ENCODE measurements at regions of chr2 and their contacts with region 1.

Region 1: DNA sequence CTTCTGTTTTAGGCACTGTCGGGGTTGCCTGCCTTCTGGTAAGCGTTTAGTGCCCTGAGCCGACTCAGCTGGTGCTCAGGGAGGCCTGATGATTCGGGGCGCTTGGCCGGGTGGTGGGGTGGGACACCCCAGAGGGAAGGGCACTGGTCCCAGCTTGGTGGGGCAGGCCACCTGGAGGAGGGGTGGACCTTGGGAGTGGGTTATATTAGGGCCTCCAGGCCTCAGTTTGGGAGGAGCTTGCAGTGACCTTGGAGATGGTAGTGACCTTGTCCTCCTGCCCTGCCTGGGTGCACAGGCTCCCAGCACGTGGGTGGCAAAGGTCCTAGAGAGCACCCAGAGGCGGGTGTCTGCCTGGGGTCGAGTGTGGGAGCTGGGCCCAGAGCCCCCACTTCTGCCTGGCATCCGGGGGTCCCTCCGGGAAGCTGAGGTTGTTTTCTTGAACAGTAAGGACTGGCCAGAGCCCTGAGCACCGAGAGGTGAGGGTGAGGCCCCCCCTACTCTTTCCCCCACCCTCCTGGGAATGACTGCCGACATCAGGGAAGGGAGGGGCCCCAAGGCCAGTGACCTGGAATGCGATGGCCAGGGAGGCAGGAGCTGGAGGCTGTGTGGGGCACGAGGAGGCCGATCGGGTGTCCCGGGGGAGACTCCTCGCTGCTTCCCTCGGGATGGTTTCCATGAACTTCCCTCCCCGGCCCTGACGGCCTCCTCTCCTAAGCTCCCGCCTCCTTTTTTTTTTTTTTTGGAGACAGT is 61.3 kb downstream of the HPCAL1 start:
- DNase-seq: no peak
- ATAC-seq: no peak
- H3K4me3 ChIP-seq: no peak overlapping the region
- H3K4me3 Mint-ChIP-seq: no peak overlapping the region
- H3K27ac ChIP-seq: no peak overlapping the region
- H3K27ac Mint-ChIP-seq: no peak overlapping the region
- H3K4me1 ChIP-seq: peaks cover 0 to 47% of the 10 kb centered on the region in 2 experiments
- H3K4me1 Mint-ChIP-seq: peaks cover 39 to 58% (median 58%) of the 10 kb centered on the region in 3 donors
- H3K27me3 ChIP-seq: no peaks in the 10 kb centered on the region
- H3K27me3 Mint-ChIP-seq: no peaks in the 10 kb centered on the region

Region 2: DNA sequence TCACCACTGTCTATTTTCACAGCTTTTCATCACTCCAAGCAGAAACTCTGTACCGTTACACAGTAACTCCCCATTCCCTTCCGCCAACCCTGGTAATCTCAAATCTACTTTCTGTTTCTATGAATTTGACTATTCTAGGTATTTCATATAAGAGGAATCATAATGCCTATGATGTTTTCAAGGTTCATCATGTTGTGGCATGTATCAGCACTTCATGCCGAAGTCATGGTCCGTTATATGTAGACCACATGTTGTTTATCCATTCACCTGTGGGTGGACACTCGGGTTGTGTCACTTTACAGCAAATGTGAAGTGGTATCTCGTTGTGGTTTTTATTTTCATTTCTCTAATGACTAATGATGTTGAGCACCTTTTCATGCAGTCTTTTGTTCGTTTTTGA is 918.9 kb before region 1 on chr2:
- CTCF ChIA-PET with region 1: interaction called in 1 of 2 experiments, 10 read pairs
- POLR2A ChIA-PET with region 1: no interaction called
- DNase-seq: no peak
- ATAC-seq: no peak
- H3K4me3 ChIP-seq: no peak overlapping the region
- H3K4me3 Mint-ChIP-seq: no peak overlapping the region
- H3K27ac ChIP-seq: no peak overlapping the region
- H3K27ac Mint-ChIP-seq: no peak overlapping the region
- H3K4me1 ChIP-seq: no peaks in the 10 kb centered on the region
- H3K4me1 Mint-ChIP-seq: peaks cover 0 to 8% (median 0%) of the 10 kb centered on the region in 3 donors
- H3K27me3 ChIP-seq: no peaks in the 10 kb centered on the region
- H3K27me3 Mint-ChIP-seq: no peaks in the 10 kb centered on the region

Region 3: GRCh38 chr2:10500601-10501361 is 136.7 kb after region 1 on chr2:
- CTCF ChIA-PET with region 1: no interaction called
- POLR2A ChIA-PET with region 1: no interaction called
- DNase-seq: peak in 3 of 35 experiments; percentile 2 to 17 (median 10)
- ATAC-seq: no peak
- H3K4me3 ChIP-seq: no peak overlapping the region
- H3K4me3 Mint-ChIP-seq: no peak overlapping the region
- H3K27ac ChIP-seq: no peak overlapping the region
- H3K27ac Mint-ChIP-seq: no peak overlapping the region
- H3K4me1 ChIP-seq: peaks cover 0 to 8% of the 10 kb centered on the region in 2 experiments
- H3K4me1 Mint-ChIP-seq: peaks cover 0 to 11% (median 4%) of the 10 kb centered on the region in 3 donors
- H3K27me3 ChIP-seq: peaks cover 0 to 41% of the 10 kb centered on the region in 2 experiments
- H3K27me3 Mint-ChIP-seq: peaks cover 8 to 20% of the 10 kb centered on the region in 2 donors